HEK293 (cell line): ENCODE measurements at regions of chr4 and their contacts with region 1.

Region 1: DNA sequence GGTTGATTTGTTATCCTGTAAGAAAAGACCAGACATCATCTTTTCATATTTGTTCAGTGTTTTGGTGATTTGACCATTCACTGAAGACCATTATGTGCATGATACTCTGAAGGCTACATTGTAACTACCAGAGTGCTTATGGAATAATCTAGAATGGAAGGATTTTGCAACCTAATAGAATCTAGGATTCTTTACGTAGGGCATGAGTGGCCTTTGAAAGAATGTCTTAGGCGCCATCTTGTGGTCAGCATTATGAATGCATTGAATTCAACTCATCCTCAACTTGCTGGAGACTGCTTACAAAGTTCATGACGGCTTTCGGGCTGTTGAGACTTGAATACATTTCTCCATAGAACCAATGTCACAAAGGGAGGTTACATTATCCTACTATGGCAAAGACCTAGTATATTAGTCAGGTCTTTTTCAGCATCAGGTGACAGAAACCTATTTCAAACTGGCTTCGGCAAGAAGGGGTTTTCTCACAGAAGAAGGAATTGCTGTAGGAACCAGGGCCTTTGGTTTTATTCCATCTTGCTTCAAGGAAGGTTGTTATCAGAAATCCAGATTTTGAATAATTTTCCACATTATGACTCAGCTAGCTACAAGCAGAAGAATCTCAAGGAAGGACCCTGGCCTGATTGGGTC is 104.1 kb downstream of the GPAT3 start:
- H3K4me3 ChIP-seq: no peak overlapping the region
- H3K27ac ChIP-seq: no peak overlapping the region
- H3K4me1 ChIP-seq: no peaks in the 10 kb centered on the region
- CTCF ChIP-seq: peak; percentile 66; the same call in 1 of the 2 replicates

Region 2: DNA sequence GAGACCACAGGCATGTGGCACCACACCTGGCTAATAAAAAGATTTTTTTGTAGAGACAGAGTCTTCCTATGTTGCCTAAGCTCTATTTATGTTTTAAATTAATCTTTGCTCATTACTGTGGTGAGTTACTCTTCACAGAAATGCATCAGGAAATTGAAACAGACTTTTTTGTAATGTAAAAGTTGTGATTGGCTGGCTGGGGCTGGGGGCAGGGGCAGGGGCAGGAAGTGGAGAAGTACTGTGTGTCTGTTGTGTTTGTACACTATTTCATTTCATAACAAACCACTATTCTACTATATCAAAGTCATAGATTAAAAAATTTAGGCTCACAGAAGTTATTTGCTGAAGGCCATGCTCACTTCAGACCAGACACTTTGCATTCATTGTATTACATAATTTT is 136.0 kb before region 1 on chr4:
- CTCF ChIA-PET with region 1: interaction called, 25 read pairs
- POLR2A ChIA-PET with region 1: no interaction called
- H3K4me3 ChIP-seq: no peak overlapping the region
- H3K27ac ChIP-seq: no peak overlapping the region
- H3K4me1 ChIP-seq: no peaks in the 10 kb centered on the region
- CTCF ChIP-seq: no peak

Region 3: GRCh38 chr4:83510442-83510841 is 129.5 kb before region 1 on chr4:
- CTCF ChIA-PET with region 1: interaction called, 25 read pairs
- POLR2A ChIA-PET with region 1: no interaction called
- H3K4me3 ChIP-seq: no peak overlapping the region
- H3K27ac ChIP-seq: no peak overlapping the region
- H3K4me1 ChIP-seq: no peaks in the 10 kb centered on the region
- CTCF ChIP-seq: no peak

Region 4: DNA sequence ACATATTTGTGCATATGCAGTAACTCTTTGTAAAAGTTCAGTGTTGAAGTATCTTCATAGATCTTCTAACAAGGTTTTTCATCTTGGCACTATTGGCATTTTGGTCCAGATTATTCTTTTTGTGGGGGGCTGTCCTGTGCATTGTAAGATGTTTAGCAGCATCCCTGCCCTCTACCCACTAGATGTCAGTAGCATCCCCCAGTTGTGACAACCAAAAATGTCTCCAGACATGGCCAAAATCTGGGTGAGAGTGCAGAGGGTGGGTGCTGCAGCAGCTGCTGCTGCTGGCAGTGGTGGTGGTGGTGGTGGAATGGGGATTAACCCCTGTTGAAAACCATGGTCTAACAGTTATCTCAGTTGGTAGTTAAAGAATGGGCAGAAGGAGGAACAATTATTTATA is 266.0 kb after region 1 on chr4:
- CTCF ChIA-PET with region 1: no interaction called
- POLR2A ChIA-PET with region 1: no interaction called
- H3K4me3 ChIP-seq: no peak overlapping the region
- H3K27ac ChIP-seq: no peak overlapping the region
- H3K4me1 ChIP-seq: no peaks in the 10 kb centered on the region
- CTCF ChIP-seq: peak; percentile 40; the same call in 1 of the 2 replicates